ENCODE measurements at regions of chr17 and their contacts with region 1.

Region 1: GRCh38 chr17:78013683-78014467 is 55.4 kb downstream of the TNRC6C start:
- DNase-seq: peak; percentile 74
- ATAC-seq: peak; percentile 65
- H3K4me3 Mint-ChIP-seq: no peak overlapping the region
- H3K27ac Mint-ChIP-seq: no peak overlapping the region
- H3K4me1 Mint-ChIP-seq: peaks cover 17% of the 10 kb centered on the region
- H3K27me3 Mint-ChIP-seq: no peaks in the 10 kb centered on the region

Region 2: GRCh38 chr17:77542551-77543490 is 471.1 kb before region 1 on chr17:
- CTCF ChIA-PET with region 1: interaction called, 67 read pairs
- POLR2A ChIA-PET with region 1: interaction called, 3 read pairs
- DNase-seq: peak; percentile 78
- ATAC-seq: peak; percentile 88
- H3K4me3 Mint-ChIP-seq: no peak overlapping the region
- H3K27ac Mint-ChIP-seq: no peak overlapping the region
- H3K4me1 Mint-ChIP-seq: peaks cover 7% of the 10 kb centered on the region
- H3K27me3 Mint-ChIP-seq: peaks cover 21% of the 10 kb centered on the region

Region 3: GRCh38 chr17:77772461-77772897 is 241.4 kb before region 1 on chr17:
- CTCF ChIA-PET with region 1: interaction called, 55 read pairs
- POLR2A ChIA-PET with region 1: interaction called, 4 read pairs
- DNase-seq: peak; percentile 77
- ATAC-seq: peak; percentile 94
- H3K4me3 Mint-ChIP-seq: no peak overlapping the region
- H3K27ac Mint-ChIP-seq: peak overlapping the region; percentile 7
- H3K4me1 Mint-ChIP-seq: peaks cover 17% of the 10 kb centered on the region
- H3K27me3 Mint-ChIP-seq: no peaks in the 10 kb centered on the region

Region 4: DNA sequence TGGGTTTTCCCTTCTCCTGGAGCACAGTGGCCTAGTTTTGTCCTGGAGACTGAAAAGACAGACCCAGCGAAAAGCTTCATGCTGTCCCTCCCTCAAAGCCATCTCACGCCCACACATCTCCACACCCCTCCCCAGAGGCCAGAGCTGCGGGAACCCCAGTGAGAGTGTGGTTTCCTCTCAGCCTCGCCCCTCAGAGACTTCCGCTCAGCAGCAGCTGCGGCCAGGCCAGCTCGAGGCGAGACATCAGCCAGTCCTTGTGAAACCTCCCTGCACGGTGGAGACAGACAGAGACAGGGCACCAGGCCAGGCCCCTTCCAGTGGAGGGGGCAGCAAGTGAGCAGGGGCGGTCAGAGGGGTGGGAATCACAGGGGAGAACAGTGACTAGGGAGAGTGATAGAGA is 132.3 kb before region 1 on chr17:
- CTCF ChIA-PET with region 1: interaction called, 14 read pairs
- POLR2A ChIA-PET with region 1: no interaction called
- DNase-seq: peak; percentile 90
- ATAC-seq: peak; percentile 71
- H3K4me3 Mint-ChIP-seq: peak overlapping the region; percentile 63
- H3K27ac Mint-ChIP-seq: peak overlapping the region; percentile 91
- H3K4me1 Mint-ChIP-seq: peaks cover 61% of the 10 kb centered on the region
- H3K27me3 Mint-ChIP-seq: peaks cover 10% of the 10 kb centered on the region

Region 5: DNA sequence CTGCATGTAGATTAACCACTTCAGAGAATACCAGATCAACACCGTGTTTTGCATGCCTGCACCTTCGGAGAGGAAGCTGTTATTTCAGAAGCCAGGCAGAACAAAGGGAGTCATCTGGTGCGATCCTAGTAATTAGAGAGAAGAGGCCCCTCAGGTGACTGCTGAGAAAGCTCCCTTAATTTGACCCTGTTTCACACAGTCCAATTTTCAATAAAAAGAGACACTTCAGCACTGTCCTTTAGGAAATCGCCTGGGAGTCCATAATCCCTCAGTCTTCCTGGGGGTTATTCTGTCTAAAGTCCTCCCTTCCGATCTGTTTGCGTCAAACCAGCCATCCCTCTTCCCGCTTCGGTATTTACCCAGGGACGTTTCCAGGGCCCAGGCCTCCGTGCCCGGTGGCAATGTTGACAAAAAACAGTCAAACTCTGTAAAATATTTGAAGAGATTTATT is 78.7 kb before region 1 on chr17:
- CTCF ChIA-PET with region 1: no interaction called
- POLR2A ChIA-PET with region 1: no interaction called
- DNase-seq: no peak
- ATAC-seq: no peak
- H3K4me3 Mint-ChIP-seq: no peak overlapping the region
- H3K27ac Mint-ChIP-seq: no peak overlapping the region
- H3K4me1 Mint-ChIP-seq: peaks cover 7% of the 10 kb centered on the region
- H3K27me3 Mint-ChIP-seq: peaks cover 19% of the 10 kb centered on the region

Region 6: DNA sequence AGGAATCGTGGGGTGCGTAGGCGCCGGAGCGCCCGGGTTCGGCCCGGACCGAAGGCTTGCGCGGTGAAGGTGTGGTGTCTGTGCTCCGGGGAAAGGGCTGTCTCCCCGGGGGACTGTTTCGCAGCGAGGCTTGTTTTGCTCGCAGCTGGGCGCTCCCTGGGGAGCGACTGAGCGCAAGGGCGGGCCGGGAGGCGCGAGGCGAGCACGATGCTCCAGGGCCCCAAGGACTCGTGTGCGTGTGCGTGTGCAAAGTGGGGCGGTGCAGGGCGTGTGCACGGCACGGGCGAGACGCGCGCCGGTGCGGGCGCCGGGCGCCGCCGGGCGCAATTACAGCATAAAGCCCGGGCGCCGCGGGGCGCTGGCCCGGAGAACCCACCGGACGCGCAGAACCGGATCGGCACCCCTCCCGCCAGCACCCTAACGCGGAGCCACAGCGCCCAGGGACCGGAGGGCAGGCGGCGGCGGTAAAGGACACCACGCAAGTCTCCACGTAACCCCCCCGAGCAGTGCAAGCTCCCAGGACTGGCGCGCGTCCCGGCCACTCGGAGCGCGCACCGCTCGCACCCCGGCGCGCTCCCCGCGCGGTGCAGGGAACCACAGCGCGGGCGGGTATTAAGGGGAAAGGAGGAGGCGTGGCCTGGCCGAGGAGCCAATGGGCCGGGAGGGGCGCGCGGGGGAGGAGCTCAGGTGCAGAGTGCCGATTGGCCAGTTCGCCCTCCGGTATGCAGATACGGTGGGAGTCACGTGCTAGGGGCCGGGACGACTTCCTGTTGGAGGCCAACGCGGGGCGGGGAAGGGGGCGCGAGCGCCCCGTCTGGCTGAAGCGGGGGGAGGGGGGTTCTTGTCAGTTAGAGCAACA is 55.8 kb before region 1 on chr17 and contains the start of gene TNRC6C:
- CTCF ChIA-PET with region 1: interaction called, 20 read pairs
- POLR2A ChIA-PET with region 1: interaction called, 8 read pairs
- DNase-seq: peak; percentile 100
- ATAC-seq: peak; percentile 88
- H3K4me3 Mint-ChIP-seq: peak within 1 kb of the TSS; percentile 92
- H3K27ac Mint-ChIP-seq: peak within 1 kb of the TSS; percentile 85
- H3K4me1 Mint-ChIP-seq: peaks cover 38% of the 10 kb centered on the region
- H3K27me3 Mint-ChIP-seq: peaks cover 31% of the 10 kb centered on the region
- total RNA-seq, gene TNRC6C: 33.3 to 36.2 TPM

Region 7: GRCh38 chr17:78001612-78002011 is 12.3 kb before region 1 on chr17:
- CTCF ChIA-PET with region 1: interaction called, 36 read pairs
- POLR2A ChIA-PET with region 1: interaction called, 3 read pairs
- DNase-seq: no peak
- ATAC-seq: no peak
- H3K4me3 Mint-ChIP-seq: no peak overlapping the region
- H3K27ac Mint-ChIP-seq: no peak overlapping the region
- H3K4me1 Mint-ChIP-seq: peaks cover 4% of the 10 kb centered on the region
- H3K27me3 Mint-ChIP-seq: no peaks in the 10 kb centered on the region

Region 8: DNA sequence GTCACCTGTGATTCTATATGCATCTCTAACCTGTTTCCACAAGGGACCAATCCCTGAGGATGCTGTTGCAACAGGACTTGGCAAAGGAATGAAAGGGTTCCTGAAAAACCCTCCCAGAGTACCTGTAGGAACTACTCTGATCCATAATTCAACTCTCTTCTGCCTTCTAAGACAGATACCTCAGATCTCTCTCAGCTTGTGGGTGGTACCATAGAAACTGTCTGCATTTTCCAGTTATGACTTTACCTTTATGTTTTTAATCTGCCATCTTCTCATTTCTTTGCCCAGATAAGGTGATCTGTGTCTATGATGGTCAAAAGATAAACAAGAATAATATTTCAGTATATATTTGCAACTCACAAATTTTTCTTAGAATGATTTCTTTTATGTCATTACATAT is 49.6 kb after region 1 on chr17:
- CTCF ChIA-PET with region 1: interaction called, 11 read pairs
- POLR2A ChIA-PET with region 1: no interaction called
- DNase-seq: no peak
- ATAC-seq: no peak
- H3K4me3 Mint-ChIP-seq: no peak overlapping the region
- H3K27ac Mint-ChIP-seq: no peak overlapping the region
- H3K4me1 Mint-ChIP-seq: no peaks in the 10 kb centered on the region
- H3K27me3 Mint-ChIP-seq: no peaks in the 10 kb centered on the region